Mucosa of descending colon (tissue), 3 donors: ENCODE measurements at regions of chr17 and their contacts with region 1.

Region 1: DNA sequence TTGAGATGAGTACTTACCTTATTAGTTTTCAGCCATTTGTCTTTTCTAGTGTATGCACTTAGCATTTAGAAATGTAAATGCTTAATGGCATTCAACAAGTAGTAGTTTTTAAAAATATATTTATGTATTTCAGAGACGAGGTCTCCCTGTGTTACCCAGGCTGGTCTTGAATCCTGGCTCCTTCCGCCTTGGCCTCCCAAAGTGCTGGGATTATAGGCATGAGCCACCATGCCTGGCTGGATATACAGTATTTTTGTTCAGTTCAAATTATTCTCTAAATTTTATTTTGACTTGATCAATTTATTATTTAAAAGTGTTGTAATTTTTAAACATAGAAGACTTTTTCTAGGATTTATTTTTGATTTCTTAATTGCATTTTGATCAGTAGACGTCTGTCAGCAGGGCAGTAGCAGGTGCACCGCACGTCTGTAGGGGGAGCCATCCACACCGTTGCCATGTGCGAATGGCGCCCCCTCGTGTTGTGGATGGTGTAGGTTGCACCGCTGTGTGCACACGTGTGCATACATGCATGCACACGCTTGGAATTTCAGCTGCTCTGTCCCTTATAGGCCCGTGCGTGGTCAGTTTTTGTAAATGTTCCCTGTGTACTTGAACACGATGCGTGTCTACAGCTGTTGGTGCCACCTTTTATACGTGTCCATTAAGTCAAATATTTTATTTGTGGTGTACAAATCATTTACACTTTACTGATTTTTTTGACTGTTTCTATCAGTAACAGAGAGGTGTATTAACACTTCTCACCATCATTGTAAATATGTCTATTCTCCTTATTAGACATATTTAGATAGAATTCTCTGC is 30.6 kb downstream of the RPTOR start:
- DNase-seq: peak; percentile 86 to 97 (median 93)
- ATAC-seq: peak; percentile 100
- H3K4me3 ChIP-seq: no peak overlapping the region
- H3K4me1 ChIP-seq: no peaks in the 10 kb centered on the region
- CTCF ChIP-seq: peak; percentile 99

Region 2: GRCh38 chr17:80426681-80427326 is 148.5 kb before region 1 on chr17:
- intact Hi-C with region 1: loop called (anchors 10 kb)
- DNase-seq: peak; percentile 76 to 86 (median 77)
- ATAC-seq: peak; percentile 92
- H3K4me3 ChIP-seq: no peak overlapping the region
- H3K4me1 ChIP-seq: no peaks in the 10 kb centered on the region
- CTCF ChIP-seq: peak; percentile 97

Region 3: DNA sequence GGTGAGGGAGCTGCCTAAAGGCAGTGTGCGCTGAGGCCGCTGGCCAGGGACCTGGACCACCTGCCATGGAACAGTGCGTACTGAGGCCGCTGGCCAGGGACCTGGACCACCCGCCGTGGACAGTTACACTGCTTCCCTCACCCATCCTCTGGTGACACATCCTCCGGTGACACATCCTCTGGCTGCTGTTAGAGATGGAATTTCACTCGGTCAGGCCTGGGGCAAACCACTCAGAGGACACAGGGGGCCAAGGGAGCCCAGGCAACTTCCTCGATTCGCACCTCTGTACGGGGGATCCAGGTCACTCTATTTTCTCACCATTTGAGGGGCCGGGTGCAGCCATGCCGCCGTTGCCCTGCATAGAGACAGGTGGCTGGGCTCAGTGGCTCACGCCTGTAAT is 63.0 kb before region 1 on chr17:
- intact Hi-C with region 1: no loop called
- DNase-seq: no peak
- ATAC-seq: no peak
- H3K4me3 ChIP-seq: no peak overlapping the region
- H3K4me1 ChIP-seq: no peaks in the 10 kb centered on the region
- CTCF ChIP-seq: no peak

Region 4: GRCh38 chr17:80637048-80637781 is 61.9 kb after region 1 on chr17:
- intact Hi-C with region 1: no loop called
- DNase-seq: no peak
- ATAC-seq: peak; percentile 60
- H3K4me3 ChIP-seq: no peak overlapping the region
- H3K4me1 ChIP-seq: no peaks in the 10 kb centered on the region
- CTCF ChIP-seq: no peak